ENCODE measurements at regions of chr11 and their contacts with region 1.

Region 1: DNA sequence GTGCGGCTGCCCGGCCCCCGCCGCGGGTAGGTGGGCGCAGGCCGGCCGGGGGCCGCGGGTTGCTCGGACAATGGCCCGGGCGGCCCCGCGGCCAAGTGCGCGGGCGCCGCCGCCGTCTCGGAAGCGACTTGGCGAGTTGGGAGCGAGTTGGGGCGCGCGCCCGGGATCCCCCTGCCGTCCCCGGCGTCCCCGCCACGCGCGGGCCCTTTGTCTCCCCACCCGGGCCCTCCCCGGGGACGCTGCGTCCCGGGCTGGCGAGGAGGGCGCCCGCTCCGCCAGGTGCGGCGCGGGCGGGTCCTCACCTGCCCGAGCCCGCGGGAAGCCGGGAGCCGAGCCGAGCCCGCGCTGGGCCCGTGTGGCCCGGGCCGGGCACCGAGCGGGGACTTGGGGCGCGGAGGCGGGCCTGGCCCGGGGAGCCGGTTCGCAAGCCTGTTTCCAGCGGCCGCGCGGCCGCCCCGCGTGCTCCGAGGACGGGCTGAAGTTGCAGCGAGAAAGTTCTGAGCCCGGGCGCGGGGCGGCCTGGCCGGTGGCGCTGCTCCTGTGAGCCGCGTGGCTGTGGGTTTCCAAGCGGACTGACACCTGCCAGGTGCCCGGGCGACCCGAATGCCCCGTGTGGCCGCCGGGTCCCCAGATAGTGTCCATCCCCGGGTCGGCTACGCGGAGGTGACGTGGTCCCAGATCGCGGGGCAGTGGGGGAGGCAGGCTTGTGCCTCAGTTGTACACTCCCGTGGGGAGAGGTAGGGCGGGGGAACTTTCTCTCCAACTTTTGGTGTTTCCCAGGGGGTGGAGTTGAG is 586 bp downstream of the LRP5 start:
- DNase-seq: peak; percentile 52 to 55
- H3K4me3 ChIP-seq: peak overlapping the region; percentile 89
- H3K4me3 Mint-ChIP-seq: peak overlapping the region; percentile 91
- H3K27ac Mint-ChIP-seq: peak overlapping the region; percentile 89
- H3K4me1 ChIP-seq: peaks cover 22% of the 10 kb centered on the region
- H3K4me1 Mint-ChIP-seq: peaks cover 44% of the 10 kb centered on the region
- H3K27me3 ChIP-seq: no peaks in the 10 kb centered on the region
- H3K27me3 Mint-ChIP-seq: no peaks in the 10 kb centered on the region
- CTCF ChIP-seq: no peak

Region 2: GRCh38 chr11:68342459-68343158 is 29.6 kb after region 1 on chr11:
- CTCF ChIA-PET with region 1: interaction called, 5 read pairs
- POLR2A ChIA-PET with region 1: interaction called, 17 read pairs
- intact Hi-C with region 1: loop called (anchors 1 kb)
- DNase-seq: peak; percentile 95
- H3K4me3 ChIP-seq: no peak overlapping the region
- H3K4me3 Mint-ChIP-seq: peak overlapping the region; percentile 43
- H3K27ac Mint-ChIP-seq: peak overlapping the region; percentile 90
- H3K4me1 ChIP-seq: peaks cover 66% of the 10 kb centered on the region
- H3K4me1 Mint-ChIP-seq: peaks cover 67% of the 10 kb centered on the region
- H3K27me3 ChIP-seq: no peaks in the 10 kb centered on the region
- H3K27me3 Mint-ChIP-seq: no peaks in the 10 kb centered on the region
- CTCF ChIP-seq: no peak

Measured in Caco-2 (cell line).